Caco-2 (cell line): ENCODE measurements at regions of chr1 and their contacts with region 1.

Region 1: GRCh38 chr1:23867953-23868556 is at the start of gene FUCA1:
- DNase-seq: peak; percentile 94
- H3K4me3 ChIP-seq: peak within 1 kb of the TSS; percentile 68
- H3K4me3 Mint-ChIP-seq: peak within 1 kb of the TSS; percentile 82
- H3K27ac Mint-ChIP-seq: peak within 1 kb of the TSS; percentile 81
- H3K4me1 ChIP-seq: 0 out of 2 replicates have a peak, but pooled peaks cover 3% of the 10 kb centered on the region
- H3K4me1 Mint-ChIP-seq: peaks cover 8% of the 10 kb centered on the region
- H3K27me3 ChIP-seq: no peaks in the 10 kb centered on the region
- H3K27me3 Mint-ChIP-seq: no peaks in the 10 kb centered on the region
- CTCF ChIP-seq: peak; percentile 75 to 88
- total RNA-seq, gene FUCA1: 21.3 and 25.5 TPM in 2 replicates

Region 2: DNA sequence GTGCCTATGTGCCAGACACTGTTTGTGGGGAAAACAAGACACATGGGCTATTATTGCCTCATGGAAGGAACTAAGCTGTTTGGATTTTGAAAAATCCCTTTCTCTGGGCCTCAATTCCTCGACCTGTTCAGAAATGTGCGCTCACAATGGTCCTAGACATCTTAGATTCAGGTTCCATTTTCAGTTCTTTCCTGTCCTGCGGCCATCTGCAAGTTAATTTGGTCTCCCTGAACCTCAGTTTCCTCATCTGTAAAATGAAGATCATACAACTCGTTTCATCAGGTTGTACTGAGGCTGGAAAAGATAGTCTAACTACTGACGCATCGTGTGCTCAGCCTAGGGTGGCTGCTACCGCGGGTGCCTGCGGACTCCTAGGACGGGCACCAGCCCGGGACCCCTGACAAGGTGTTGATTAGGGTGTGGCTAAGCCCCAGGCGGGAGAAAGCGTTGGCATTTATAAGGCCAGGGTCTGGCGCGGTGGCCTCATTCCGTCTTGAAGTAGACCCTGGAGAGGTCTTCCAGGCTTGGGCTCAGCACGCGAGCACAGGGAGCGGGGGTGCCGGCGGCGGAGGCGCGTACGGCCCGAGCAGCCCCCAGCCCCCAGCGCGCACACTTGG is 125.3 kb before region 1 on chr1:
- CTCF ChIA-PET with region 1: no interaction called
- POLR2A ChIA-PET with region 1: no interaction called
- intact Hi-C with region 1: no loop called
- DNase-seq: no peak
- H3K4me3 ChIP-seq: peak overlapping the region; percentile 92
- H3K4me3 Mint-ChIP-seq: peak overlapping the region; percentile 82
- H3K27ac Mint-ChIP-seq: peak overlapping the region; percentile 80
- H3K4me1 ChIP-seq: no peaks in the 10 kb centered on the region
- H3K4me1 Mint-ChIP-seq: no peaks in the 10 kb centered on the region
- H3K27me3 ChIP-seq: no peaks in the 10 kb centered on the region
- H3K27me3 Mint-ChIP-seq: no peaks in the 10 kb centered on the region
- CTCF ChIP-seq: no peak

Region 3: DNA sequence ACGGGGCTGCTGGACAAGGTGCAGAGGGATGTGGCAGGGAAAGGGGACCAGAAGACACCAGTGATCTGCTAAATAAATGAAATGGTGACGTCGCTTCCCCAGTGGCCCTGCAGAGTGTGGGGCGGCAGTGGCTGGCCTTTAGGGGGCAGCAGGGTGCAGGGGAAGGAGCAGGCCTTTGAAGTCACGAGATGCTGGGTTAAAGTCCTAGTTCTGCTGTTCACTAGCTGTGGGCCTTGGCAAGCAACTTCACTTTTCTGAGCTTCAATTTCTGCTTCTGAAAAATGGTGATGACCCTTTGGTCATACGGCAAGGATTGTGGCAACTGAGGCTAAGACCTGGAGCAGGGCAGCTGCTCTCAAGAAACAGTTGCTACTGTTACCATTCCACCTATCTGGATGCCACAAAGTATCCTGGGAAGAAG is 58.3 kb before region 1 on chr1:
- CTCF ChIA-PET with region 1: interaction called, 6 read pairs
- POLR2A ChIA-PET with region 1: no interaction called
- intact Hi-C with region 1: loop called (anchors 1 kb)
- DNase-seq: peak; percentile 76 to 82
- H3K4me3 ChIP-seq: no peak overlapping the region
- H3K4me3 Mint-ChIP-seq: no peak overlapping the region
- H3K27ac Mint-ChIP-seq: no peak overlapping the region
- H3K4me1 ChIP-seq: no peaks in the 10 kb centered on the region
- H3K4me1 Mint-ChIP-seq: no peaks in the 10 kb centered on the region
- H3K27me3 ChIP-seq: no peaks in the 10 kb centered on the region
- H3K27me3 Mint-ChIP-seq: no peaks in the 10 kb centered on the region
- CTCF ChIP-seq: peak; percentile 57 to 77

Region 4: DNA sequence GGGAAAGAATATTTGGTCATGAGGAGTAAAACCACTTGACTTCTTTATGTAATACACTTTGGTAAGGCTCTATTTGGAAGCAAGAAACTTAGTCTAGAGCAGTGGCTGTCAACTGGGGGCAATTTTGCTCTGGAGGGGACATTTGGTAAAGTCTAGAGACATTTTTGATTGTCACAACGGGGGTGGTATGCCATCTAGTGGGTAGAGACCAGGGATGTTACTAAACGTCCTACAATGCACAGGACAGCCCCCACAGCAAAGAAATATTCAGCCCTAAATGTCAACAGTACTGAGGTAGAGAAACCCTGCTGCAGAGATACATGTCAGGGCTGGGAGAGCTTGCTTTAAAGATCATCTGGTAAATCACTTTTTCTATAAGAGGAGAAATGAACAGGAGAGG is 13.5 kb before region 1 on chr1:
- CTCF ChIA-PET with region 1: no interaction called
- POLR2A ChIA-PET with region 1: no interaction called
- intact Hi-C with region 1: no loop called
- DNase-seq: peak in 1 of 2 experiments; percentile 11
- H3K4me3 ChIP-seq: no peak overlapping the region
- H3K4me3 Mint-ChIP-seq: no peak overlapping the region
- H3K27ac Mint-ChIP-seq: no peak overlapping the region
- H3K4me1 ChIP-seq: no peaks in the 10 kb centered on the region
- H3K4me1 Mint-ChIP-seq: no peaks in the 10 kb centered on the region
- H3K27me3 ChIP-seq: no peaks in the 10 kb centered on the region
- H3K27me3 Mint-ChIP-seq: no peaks in the 10 kb centered on the region
- CTCF ChIP-seq: peak in 1 of 2 experiments; percentile 15

Region 5: GRCh38 chr1:23902321-23903278 is 34.5 kb after region 1 on chr1:
- CTCF ChIA-PET with region 1: no interaction called
- POLR2A ChIA-PET with region 1: no interaction called
- intact Hi-C with region 1: loop called (anchors 1 kb)
- DNase-seq: no peak
- H3K4me3 ChIP-seq: no peak overlapping the region
- H3K4me3 Mint-ChIP-seq: no peak overlapping the region
- H3K27ac Mint-ChIP-seq: no peak overlapping the region
- H3K4me1 ChIP-seq: no peaks in the 10 kb centered on the region
- H3K4me1 Mint-ChIP-seq: no peaks in the 10 kb centered on the region
- H3K27me3 ChIP-seq: no peaks in the 10 kb centered on the region
- H3K27me3 Mint-ChIP-seq: no peaks in the 10 kb centered on the region
- CTCF ChIP-seq: no peak